HepG2 (cell line): ENCODE measurements at regions of chr14 and their contacts with region 1.

Region 1: GRCh38 chr14:37583359-37584231 is 11.5 kb downstream of the FOXA1 start:
- DNase-seq: peak; percentile 54
- ATAC-seq: peak; percentile 64
- H3K4me3 ChIP-seq: peak overlapping the region; percentile 46 to 70 (median 68); a peak in 5 of 6 replicates
- H3K27ac ChIP-seq: peak overlapping the region; percentile 43
- H3K4me1 ChIP-seq: peaks cover 24% of the 10 kb centered on the region
- H3K27me3 ChIP-seq: no peaks in the 10 kb centered on the region; a peak in 1 of 5 replicates
- CTCF ChIP-seq: peak; percentile 32; the same call in 1 of the 2 replicates
- EP300 ChIP-seq: no peak
- POLR2A ChIP-seq: peak in 1 of 2 experiments; percentile 41; a peak in 2 of 4 replicates
- RAD21 ChIP-seq: peak; percentile 48

Region 2: DNA sequence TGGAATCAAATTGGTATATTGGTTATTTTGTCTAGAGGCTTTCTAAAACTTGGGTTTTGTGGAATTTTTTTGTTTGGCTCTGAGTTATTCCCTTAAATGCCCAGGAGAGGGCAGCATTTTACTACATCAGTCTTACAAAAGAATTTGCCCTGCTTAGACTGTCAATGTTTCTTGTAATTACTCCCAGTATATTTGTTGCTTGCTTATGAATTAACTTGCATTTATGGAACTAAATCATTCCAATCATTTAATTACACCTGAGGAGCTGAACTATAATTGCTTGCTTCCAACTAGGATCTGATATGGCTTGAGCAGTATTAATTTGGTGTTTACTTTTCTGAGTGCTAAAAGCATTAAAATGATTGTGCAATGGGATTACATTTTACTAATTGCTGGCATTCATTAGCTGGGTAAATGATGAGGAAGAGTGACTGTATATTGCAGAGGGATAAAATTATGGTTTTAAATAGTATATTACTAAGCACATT is 337.1 kb before region 1 on chr14:
- CTCF ChIA-PET with region 1: interaction called, 3 read pairs
- POLR2A ChIA-PET with region 1: interaction called, 10 read pairs
- in situ Hi-C with region 1: no loop called
- intact Hi-C with region 1: no loop called
- DNase-seq: peak; percentile 86
- ATAC-seq: peak; percentile 79
- H3K4me3 ChIP-seq: no peak overlapping the region
- H3K27ac ChIP-seq: no peak overlapping the region
- H3K4me1 ChIP-seq: peaks cover 33% of the 10 kb centered on the region
- H3K27me3 ChIP-seq: no peaks in the 10 kb centered on the region
- CTCF ChIP-seq: peak; percentile 88
- EP300 ChIP-seq: peak in 1 of 2 experiments; percentile 37; a peak in 1 of 4 replicates
- POLR2A ChIP-seq: no peak
- RAD21 ChIP-seq: peak; percentile 93

Region 3: GRCh38 chr14:37340355-37340754 is 243.2 kb before region 1 on chr14:
- CTCF ChIA-PET with region 1: no interaction called
- POLR2A ChIA-PET with region 1: interaction called, 13 read pairs
- in situ Hi-C with region 1: no loop called
- intact Hi-C with region 1: loop called (anchors 5 kb)
- DNase-seq: peak; percentile 39
- ATAC-seq: peak; percentile 97
- H3K4me3 ChIP-seq: no peak overlapping the region
- H3K27ac ChIP-seq: no peak overlapping the region
- H3K4me1 ChIP-seq: no peaks in the 10 kb centered on the region
- H3K27me3 ChIP-seq: no peaks in the 10 kb centered on the region
- CTCF ChIP-seq: peak; percentile 64
- EP300 ChIP-seq: no peak
- POLR2A ChIP-seq: no peak
- RAD21 ChIP-seq: no peak

Region 4: GRCh38 chr14:37546621-37547447 is 36.8 kb before region 1 on chr14:
- CTCF ChIA-PET with region 1: no interaction called
- POLR2A ChIA-PET with region 1: interaction called, 35 read pairs
- in situ Hi-C with region 1: no loop called
- intact Hi-C with region 1: loop called (anchors 2 kb)
- DNase-seq: peak; percentile 100
- ATAC-seq: peak; percentile 100
- H3K4me3 ChIP-seq: peak overlapping the region; percentile 5 to 38 (median 29); a peak in 5 of 6 replicates
- H3K27ac ChIP-seq: peak overlapping the region; percentile 73
- H3K4me1 ChIP-seq: peaks cover 36% of the 10 kb centered on the region
- H3K27me3 ChIP-seq: no peaks in the 10 kb centered on the region
- CTCF ChIP-seq: no peak
- EP300 ChIP-seq: peak; percentile 77 to 98; a peak in 3 of 4 replicates
- POLR2A ChIP-seq: peak in 1 of 2 experiments; percentile 47; a peak in 1 of 4 replicates
- RAD21 ChIP-seq: peak; percentile 50; the same call in 1 of the 2 replicates

Region 5: GRCh38 chr14:37864861-37865718 is 281.5 kb after region 1 on chr14:
- CTCF ChIA-PET with region 1: no interaction called
- POLR2A ChIA-PET with region 1: interaction called, 31 read pairs
- in situ Hi-C with region 1: no loop called
- intact Hi-C with region 1: no loop called
- DNase-seq: peak; percentile 100
- ATAC-seq: peak; percentile 92
- H3K4me3 ChIP-seq: peak overlapping the region; percentile 18 to 56 (median 47)
- H3K27ac ChIP-seq: peak overlapping the region; percentile 82
- H3K4me1 ChIP-seq: peaks cover 63% of the 10 kb centered on the region
- H3K27me3 ChIP-seq: no peaks in the 10 kb centered on the region
- CTCF ChIP-seq: peak; percentile 72
- EP300 ChIP-seq: peak; percentile 99
- POLR2A ChIP-seq: peak; percentile 48 to 75
- RAD21 ChIP-seq: peak; percentile 77